HCT116 (cell line): ENCODE measurements at regions of chr15 and their contacts with region 1.

Region 1: DNA sequence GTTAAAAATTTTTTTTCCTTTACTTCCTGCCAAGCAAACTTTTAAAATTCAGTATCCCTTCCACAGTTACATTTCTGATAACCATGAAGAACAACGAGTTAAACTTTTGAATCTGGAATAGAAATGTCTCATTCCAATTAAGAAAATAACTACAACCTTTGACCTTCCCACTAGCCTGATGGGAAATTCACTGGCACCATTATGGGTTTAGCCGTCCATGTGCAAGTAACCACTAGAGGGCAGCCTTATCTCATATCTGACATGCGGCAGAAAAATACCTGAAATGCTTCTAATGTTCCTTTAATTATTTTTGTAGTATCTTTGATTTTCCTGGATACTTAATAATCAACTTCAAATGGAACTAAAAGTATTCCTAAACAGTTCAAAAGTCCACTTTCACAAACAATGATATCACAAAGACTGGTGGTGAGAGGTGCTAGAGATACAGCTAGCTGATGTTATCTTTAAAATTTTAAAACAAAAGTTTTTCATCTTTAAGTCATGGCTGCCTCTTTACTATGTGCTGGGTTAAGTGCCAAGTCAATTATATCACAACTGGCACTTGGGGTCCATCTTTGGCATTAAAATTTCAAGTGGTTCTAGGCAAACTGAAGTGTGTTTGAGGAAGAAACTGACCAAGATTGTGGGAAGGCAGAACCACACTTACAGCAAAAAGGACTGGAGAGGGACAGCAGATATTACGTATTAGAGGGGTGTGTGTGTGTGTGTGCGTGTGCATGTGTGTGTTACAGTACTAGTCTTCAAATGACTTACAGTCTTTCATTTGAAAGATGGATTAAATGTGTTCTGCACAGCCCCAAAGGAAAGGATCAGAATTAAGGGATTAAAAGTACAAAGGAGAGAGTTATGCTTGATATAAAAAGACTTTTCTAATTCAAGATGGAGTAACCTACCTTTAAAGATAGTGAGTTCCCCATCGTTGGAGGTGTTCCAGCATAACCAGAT is 107.1 kb upstream of the ICE2 start:
- DNase-seq: peak; percentile 57
- ATAC-seq: peak; percentile 83
- H3K4me3 ChIP-seq: no peak overlapping the region
- H3K27ac ChIP-seq: no peak overlapping the region
- H3K4me1 ChIP-seq: no peaks in the 10 kb centered on the region
- H3K27me3 ChIP-seq: peaks cover 48% of the 10 kb centered on the region
- CTCF ChIP-seq: peak; percentile 71 to 96 (median 84); a peak in 5 of 6 replicates
- POLR2A ChIP-seq: no peak
- RAD21 ChIP-seq: peak; percentile 81

Region 2: DNA sequence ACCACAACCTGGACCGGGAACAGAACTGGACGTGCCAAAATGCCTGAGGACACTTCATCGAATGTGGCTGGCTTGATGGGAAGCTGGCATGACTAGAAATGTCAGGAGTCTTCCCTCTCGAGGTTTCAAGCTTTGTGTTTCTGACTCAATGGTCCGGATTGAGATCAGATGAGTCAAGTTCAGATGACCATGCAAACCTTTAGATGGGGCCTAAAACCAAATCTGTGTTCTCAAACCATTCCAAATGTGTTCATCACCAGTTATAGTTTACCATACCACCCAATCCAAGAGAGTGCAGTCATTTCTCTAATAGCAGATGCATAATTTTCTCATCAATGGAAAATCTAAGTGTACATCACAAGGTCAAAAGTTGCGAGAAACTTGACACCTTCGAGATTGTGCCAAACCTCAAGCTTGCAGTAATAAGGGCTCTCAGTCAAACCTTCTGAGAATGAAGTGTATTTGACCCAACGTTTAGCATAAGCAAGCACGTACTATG is 274.0 kb after region 1 on chr15:
- CTCF ChIA-PET with region 1: no interaction called
- POLR2A ChIA-PET with region 1: no interaction called
- RAD21 ChIA-PET with region 1: no interaction called
- intact Hi-C with region 1: no loop called
- DNase-seq: no peak
- ATAC-seq: no peak
- H3K4me3 ChIP-seq: no peak overlapping the region
- H3K27ac ChIP-seq: no peak overlapping the region
- H3K4me1 ChIP-seq: no peaks in the 10 kb centered on the region
- H3K27me3 ChIP-seq: peaks cover 50% of the 10 kb centered on the region; the same call in 1 of the 2 replicates
- CTCF ChIP-seq: no peak
- POLR2A ChIP-seq: no peak
- RAD21 ChIP-seq: no peak

Region 3: DNA sequence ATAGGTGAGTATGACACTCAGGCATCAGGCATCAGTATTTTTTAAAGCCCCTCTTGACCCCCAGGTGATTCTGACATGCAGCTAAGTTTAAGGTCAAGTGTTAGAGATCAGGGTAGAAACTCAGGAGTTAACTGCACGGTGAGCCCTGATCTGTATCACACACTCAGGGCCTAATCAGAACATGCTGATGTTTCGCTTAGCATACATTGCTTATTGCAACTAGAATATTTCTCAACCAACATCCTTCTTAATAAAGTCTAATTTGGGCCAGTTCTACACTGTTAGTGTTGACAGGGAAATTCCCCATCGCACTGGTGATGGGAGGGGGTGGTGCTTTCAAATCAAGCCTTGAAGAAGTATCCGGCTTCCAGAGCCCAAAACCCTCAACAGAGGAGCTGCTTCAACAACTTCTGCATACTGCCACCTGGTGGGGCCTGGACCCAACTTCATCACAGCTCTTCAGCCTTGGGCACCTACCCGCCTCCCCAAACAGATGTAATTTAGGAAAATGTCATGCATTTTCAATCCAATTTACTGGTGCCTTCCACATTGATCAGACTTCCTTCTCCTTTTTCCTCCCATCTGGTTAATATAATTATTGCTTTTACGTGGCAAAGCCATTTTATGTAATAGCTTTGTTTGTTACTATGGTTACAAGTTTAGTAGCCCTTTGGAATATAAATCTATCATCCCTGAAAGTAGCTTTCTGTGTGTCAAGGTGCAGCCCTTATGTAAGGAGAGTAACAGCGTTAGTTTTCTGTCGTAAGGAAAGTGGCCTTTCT is 330.8 kb after region 1 on chr15:
- CTCF ChIA-PET with region 1: interaction called, 60 read pairs
- POLR2A ChIA-PET with region 1: interaction called, 4 read pairs
- RAD21 ChIA-PET with region 1: interaction called, 5 to 6 read pairs
- intact Hi-C with region 1: loop called (anchors 1 kb)
- DNase-seq: peak; percentile 48
- ATAC-seq: peak; percentile 94
- H3K4me3 ChIP-seq: no peak overlapping the region
- H3K27ac ChIP-seq: no peak overlapping the region
- H3K4me1 ChIP-seq: no peaks in the 10 kb centered on the region
- H3K27me3 ChIP-seq: peaks cover 32% of the 10 kb centered on the region; the same call in 1 of the 2 replicates
- CTCF ChIP-seq: peak; percentile 29 to 75 (median 73); a peak in 5 of 6 replicates
- POLR2A ChIP-seq: no peak
- RAD21 ChIP-seq: peak; percentile 53

Region 4: DNA sequence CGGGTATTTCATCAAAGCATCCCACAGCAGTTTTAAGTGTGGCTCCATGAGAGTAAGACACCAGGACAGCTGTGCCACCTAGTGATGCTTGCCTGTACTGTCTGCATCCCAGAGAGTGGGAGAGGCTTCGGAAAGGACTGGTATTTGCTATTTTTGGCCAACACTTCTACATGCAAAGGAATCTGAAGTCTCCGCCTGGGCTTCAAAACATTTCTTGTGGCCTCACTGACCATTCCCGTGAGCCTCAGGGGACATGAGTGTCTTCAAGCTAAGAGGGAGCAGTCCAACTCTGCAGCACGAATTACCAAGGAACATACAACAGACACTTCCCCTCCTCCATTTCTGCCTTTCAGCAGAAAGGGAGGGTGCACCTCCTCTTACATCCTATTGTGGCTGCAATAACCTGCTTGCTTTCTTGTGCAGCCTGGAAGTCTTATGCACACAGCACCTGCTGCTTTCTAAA is 465.6 kb after region 1 on chr15:
- CTCF ChIA-PET with region 1: no interaction called
- POLR2A ChIA-PET with region 1: no interaction called
- RAD21 ChIA-PET with region 1: no interaction called
- intact Hi-C with region 1: loop called (anchors 5 kb)
- DNase-seq: no peak
- ATAC-seq: peak; percentile 73
- H3K4me3 ChIP-seq: no peak overlapping the region
- H3K27ac ChIP-seq: no peak overlapping the region
- H3K4me1 ChIP-seq: no peaks in the 10 kb centered on the region
- H3K27me3 ChIP-seq: peaks cover 26% of the 10 kb centered on the region; the same call in 1 of the 2 replicates
- CTCF ChIP-seq: peak in 2 of 3 experiments; percentile 32 to 41; a peak in 4 of 6 replicates
- POLR2A ChIP-seq: no peak
- RAD21 ChIP-seq: peak; percentile 29; the same call in 1 of the 2 replicates